WTC11 (cell line): ENCODE measurements at regions of chr6 and their contacts with region 1.

Region 1: GRCh38 chr6:8229915-8230756 is 127.8 kb upstream of the EEF1E1 start:
- DNase-seq: peak; percentile 25
- ATAC-seq: peak; percentile 97
- H3K4me3 Mint-ChIP-seq: no peak overlapping the region
- H3K27ac Mint-ChIP-seq: peak overlapping the region; percentile 28
- H3K4me1 Mint-ChIP-seq: peaks cover 13% of the 10 kb centered on the region
- H3K27me3 Mint-ChIP-seq: peaks cover 3% of the 10 kb centered on the region
- CTCF ChIP-seq: no peak

Region 2: DNA sequence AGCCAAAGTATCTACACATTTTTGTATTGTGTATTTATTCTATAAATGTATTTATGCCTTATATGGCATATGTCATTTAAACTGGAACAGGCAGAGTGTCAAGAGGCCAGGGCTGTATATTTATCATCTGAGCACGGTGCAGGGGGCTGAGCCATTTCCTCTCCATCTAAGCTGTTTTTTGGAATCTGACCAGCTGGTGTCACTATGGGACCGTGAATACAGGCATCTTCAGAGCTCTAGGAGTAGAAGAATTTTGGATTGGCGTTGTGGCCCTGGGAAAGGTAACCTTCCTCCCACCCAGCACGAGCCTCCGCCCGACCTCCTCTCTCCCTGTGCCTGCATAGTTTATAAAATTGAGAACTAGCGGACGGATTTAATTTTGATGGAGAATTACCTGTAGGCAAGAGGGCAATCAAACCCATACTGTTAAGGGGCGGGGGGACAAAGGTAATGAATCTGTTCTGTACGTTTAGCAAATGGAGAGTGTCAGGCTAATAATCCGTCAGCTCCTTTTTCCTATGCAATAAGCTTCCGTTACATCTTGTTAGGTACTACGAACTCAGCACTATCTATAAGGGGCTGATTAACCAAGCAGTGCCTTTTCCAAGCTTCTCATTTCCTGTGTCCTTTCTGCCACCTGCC is 98.8 kb before region 1 on chr6:
- CTCF ChIA-PET with region 1: interaction called, 10 read pairs
- POLR2A ChIA-PET with region 1: no interaction called
- DNase-seq: peak; percentile 65
- ATAC-seq: peak; percentile 97
- H3K4me3 Mint-ChIP-seq: 0 out of 2 replicates have a peak overlapping the region, but pooled peaks have one; percentile 11
- H3K27ac Mint-ChIP-seq: no peak overlapping the region
- H3K4me1 Mint-ChIP-seq: no peaks in the 10 kb centered on the region; the same call in 1 of the 2 replicates
- H3K27me3 Mint-ChIP-seq: no peaks in the 10 kb centered on the region
- CTCF ChIP-seq: peak; percentile 48